Prostate gland (tissue), 2 donors: ENCODE measurements at regions of chr6 and their contacts with region 1.

Region 1: DNA sequence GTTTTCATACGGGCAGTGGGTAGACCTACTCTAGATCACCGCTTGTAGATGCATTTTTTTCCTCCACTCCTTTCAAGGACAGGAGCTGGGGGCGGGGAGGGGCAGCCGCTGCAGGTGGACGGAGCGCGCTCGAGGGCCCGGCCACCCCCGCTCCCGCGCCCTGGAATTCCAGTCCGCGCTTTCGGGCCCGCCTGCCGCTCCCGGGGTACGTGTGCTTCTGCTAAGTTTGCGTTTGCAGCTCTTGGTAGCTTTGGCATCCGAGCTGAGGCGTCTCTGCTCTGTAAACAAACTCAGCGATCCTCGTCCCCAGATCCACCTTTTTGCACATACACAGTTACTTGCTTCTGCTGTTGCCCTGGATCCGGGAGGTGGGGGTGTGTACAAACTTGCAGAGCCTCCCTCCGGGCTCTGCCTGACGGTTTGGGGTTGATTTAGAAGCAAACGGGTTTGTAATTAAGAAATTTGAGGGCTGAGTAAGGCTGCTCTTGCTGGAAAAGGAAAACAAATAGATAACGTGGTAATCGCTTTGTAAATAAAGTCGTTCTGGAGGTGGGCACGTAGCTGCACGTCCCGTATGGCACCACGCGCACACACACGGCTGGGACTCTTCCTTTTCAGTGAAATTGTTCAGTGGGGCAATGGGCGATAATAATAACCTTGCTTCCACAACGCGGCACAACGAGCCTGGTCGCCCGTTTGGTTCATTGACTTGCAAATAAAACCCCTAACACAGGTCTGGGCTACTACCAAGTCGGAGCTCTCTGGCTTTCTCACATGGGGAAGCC is 976 bp upstream of the CITED2 start:
- DNase-seq: peak; percentile 96
- H3K4me3 ChIP-seq: peak overlapping the region; percentile 72 to 84
- H3K27ac ChIP-seq: peak overlapping the region; percentile 90 to 95
- H3K4me1 ChIP-seq: peaks cover 3% of the 10 kb centered on the region
- H3K27me3 ChIP-seq: no peaks in the 10 kb centered on the region
- CTCF ChIP-seq: no peak
- POLR2A ChIP-seq: peak; percentile 27

Region 2: GRCh38 chr6:139597771-139598755 is 222.6 kb after region 1 on chr6:
- intact Hi-C with region 1: loop called (anchors 5 kb)
- DNase-seq: peak; percentile 32
- H3K4me3 ChIP-seq: no peak overlapping the region
- H3K27ac ChIP-seq: peak overlapping the region; percentile 47 to 60
- H3K4me1 ChIP-seq: peaks cover 8% of the 10 kb centered on the region
- H3K27me3 ChIP-seq: no peaks in the 10 kb centered on the region
- CTCF ChIP-seq: no peak
- POLR2A ChIP-seq: no peak

Region 3: GRCh38 chr6:139743664-139744437 is 368.4 kb after region 1 on chr6:
- intact Hi-C with region 1: no loop called
- DNase-seq: no peak
- H3K4me3 ChIP-seq: no peak overlapping the region
- H3K27ac ChIP-seq: no peak overlapping the region
- H3K4me1 ChIP-seq: no peaks in the 10 kb centered on the region
- H3K27me3 ChIP-seq: no peaks in the 10 kb centered on the region
- CTCF ChIP-seq: no peak
- POLR2A ChIP-seq: no peak

Region 4: GRCh38 chr6:139881728-139882211 is 506.3 kb after region 1 on chr6:
- intact Hi-C with region 1: loop called (anchors 10 kb)
- DNase-seq: peak; percentile 34
- H3K4me3 ChIP-seq: no peak overlapping the region
- H3K27ac ChIP-seq: no peak overlapping the region
- H3K4me1 ChIP-seq: no peaks in the 10 kb centered on the region
- H3K27me3 ChIP-seq: no peaks in the 10 kb centered on the region
- CTCF ChIP-seq: peak in 3 of 4 experiments; percentile 53 to 64 (median 58)
- POLR2A ChIP-seq: no peak

Region 5: DNA sequence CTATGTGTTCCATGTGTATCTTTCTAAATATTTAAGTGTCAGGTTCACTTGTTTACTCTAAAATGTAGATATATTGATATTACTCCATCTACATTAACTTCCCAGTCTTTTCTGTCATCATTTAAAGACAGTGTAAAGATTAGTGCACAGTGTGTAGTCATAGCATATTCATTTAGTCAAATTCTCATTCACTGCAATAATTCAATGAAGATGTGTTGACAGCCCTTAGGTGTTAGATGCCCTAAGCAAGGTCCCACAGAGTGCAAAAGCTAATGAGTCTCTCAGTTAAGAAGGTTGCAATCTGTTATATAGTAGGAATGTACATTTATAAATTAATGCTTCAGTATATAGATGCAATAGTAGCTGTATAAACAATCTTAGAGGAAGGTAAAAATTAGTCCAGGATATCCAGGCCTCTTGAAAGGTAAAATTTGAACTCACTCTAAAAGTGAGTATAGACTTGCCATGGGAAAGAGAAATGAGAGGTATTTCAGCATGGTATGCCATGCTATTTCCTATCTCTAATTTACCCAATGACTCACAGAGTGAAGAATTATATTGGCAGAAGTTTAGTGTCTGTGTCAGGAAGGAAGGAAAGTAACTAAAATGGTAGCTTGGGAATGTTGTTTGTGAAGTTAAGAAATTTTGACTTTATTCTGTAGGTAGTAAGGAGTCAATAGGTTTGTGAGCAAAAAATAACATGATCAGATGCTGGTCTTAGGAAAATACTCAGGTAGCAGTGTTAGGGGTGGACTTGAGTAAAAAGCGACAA is 968.9 kb after region 1 on chr6:
- intact Hi-C with region 1: loop called (anchors 10 kb)
- DNase-seq: no peak
- H3K4me3 ChIP-seq: no peak overlapping the region
- H3K27ac ChIP-seq: no peak overlapping the region
- H3K4me1 ChIP-seq: no peaks in the 10 kb centered on the region
- H3K27me3 ChIP-seq: no peaks in the 10 kb centered on the region
- CTCF ChIP-seq: no peak
- POLR2A ChIP-seq: no peak

Region 6: DNA sequence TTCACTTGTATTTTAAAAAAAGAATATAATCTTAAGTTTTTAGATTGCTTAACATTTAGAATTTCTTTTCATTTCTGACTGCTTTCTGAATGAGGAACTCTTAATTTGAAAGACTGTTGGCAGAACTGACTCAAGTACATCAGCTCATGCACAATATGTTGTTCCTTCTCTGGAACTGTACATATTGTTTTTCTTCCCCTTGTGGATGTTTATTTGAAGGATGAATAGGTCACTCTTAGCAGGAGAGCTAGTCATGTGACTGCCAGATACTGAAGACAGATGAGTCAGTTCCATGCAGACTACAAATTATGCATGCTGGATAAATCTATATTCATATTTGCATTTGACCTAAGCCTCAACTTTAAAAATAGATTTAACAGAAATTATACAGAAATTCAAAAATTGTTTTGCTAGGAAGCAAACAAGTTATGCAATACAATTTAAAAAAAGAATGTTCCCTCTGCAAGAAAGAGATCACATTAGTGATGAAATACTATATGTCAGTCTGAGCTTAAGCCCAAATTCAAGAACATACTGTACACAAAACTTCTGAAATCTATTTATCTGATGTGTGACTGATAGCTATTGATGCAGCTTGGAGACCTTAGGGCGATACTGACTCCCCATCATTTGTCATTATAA is 1482.4 kb after region 1 on chr6:
- intact Hi-C with region 1: loop called (anchors 10 kb)
- DNase-seq: no peak
- H3K4me3 ChIP-seq: no peak overlapping the region
- H3K27ac ChIP-seq: no peak overlapping the region
- H3K4me1 ChIP-seq: no peaks in the 10 kb centered on the region
- H3K27me3 ChIP-seq: no peaks in the 10 kb centered on the region
- CTCF ChIP-seq: no peak
- POLR2A ChIP-seq: no peak

Region 7: DNA sequence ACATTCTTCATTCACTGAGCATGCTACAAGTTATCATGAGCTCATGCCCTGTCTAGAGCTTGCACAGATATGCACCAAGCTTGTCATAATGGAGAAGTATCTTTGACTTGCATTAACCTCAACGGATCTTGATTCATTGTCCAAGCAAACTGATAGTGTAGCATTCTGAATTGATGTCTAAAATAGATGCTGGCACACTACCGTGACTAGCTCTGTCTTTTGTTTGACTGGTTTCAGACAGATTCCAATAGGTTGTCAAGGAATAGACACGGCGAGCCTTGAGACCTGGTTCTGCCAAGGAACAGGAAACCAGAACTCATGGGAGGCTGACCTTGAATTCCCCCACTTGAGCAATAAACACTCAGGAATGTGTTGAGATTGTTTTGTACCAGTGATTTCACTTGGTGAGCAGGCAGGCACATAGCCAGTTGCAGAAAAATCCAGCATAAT is 1604.2 kb after region 1 on chr6:
- intact Hi-C with region 1: loop called (anchors 10 kb)
- DNase-seq: peak; percentile 51
- H3K4me3 ChIP-seq: no peak overlapping the region
- H3K27ac ChIP-seq: peak overlapping the region in 1 of 2 donors; percentile 13
- H3K4me1 ChIP-seq: no peaks in the 10 kb centered on the region
- H3K27me3 ChIP-seq: no peaks in the 10 kb centered on the region
- CTCF ChIP-seq: no peak
- POLR2A ChIP-seq: no peak